Naive thymus-derived CD4-positive, alpha-beta T cell (primary cell): ENCODE measurements at regions of chr3 and their contacts with region 1.

Region 1: DNA sequence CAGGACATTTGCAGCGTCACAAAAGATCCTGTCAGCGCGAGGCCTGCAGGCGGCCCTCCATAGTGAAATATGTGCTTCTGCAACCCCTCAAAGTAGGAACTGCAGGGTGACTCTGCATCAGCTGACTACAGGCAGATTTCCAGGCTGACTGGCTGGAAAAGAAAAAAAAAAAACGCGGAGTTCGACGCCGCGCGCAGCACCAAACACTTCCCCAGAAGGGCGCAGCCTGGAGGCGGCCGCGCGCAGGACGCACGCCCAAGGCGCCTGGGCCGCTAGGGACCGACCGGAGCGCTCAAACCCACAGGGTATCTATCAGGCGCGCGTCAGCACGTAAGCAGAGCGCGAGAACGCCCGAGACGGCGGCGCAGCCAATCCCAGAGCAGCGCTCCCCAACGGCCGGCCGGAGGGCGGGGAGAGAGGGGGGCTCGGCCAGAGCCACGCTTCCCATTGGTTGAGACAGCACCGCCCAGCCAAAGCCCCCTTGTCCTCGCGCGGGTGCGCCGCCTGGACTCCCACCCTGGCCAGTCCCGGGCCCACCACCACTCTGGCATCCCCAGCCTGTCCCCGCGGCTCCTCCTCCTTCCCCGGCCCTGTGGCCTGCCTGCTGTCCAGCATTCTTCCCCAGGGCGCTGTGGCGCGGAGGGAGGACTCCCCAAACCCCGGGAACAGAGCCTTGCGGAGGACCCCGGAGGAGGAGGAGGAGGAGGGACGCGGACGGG is 1.0 kb downstream of the BDH1 start:
- DNase-seq: peak; percentile 76 to 93 (median 83)
- ATAC-seq: peak; percentile 97
- H3K4me3 ChIP-seq: peak overlapping the region; percentile 96
- H3K4me3 Mint-ChIP-seq: peak overlapping the region; percentile 91 to 95 (median 93)
- H3K27ac ChIP-seq: peak overlapping the region; percentile 89
- H3K27ac Mint-ChIP-seq: peak overlapping the region; percentile 57 to 94 (median 86)
- H3K4me1 ChIP-seq: peaks cover 7 to 9% of the 10 kb centered on the region in 2 donors
- H3K4me1 Mint-ChIP-seq: peaks cover 23 to 36% (median 31%) of the 10 kb centered on the region in 7 donors
- H3K27me3 ChIP-seq: no peaks in the 10 kb centered on the region
- H3K27me3 Mint-ChIP-seq: peaks cover 0 to 10% (median 6%) of the 10 kb centered on the region in 5 donors

Region 2: DNA sequence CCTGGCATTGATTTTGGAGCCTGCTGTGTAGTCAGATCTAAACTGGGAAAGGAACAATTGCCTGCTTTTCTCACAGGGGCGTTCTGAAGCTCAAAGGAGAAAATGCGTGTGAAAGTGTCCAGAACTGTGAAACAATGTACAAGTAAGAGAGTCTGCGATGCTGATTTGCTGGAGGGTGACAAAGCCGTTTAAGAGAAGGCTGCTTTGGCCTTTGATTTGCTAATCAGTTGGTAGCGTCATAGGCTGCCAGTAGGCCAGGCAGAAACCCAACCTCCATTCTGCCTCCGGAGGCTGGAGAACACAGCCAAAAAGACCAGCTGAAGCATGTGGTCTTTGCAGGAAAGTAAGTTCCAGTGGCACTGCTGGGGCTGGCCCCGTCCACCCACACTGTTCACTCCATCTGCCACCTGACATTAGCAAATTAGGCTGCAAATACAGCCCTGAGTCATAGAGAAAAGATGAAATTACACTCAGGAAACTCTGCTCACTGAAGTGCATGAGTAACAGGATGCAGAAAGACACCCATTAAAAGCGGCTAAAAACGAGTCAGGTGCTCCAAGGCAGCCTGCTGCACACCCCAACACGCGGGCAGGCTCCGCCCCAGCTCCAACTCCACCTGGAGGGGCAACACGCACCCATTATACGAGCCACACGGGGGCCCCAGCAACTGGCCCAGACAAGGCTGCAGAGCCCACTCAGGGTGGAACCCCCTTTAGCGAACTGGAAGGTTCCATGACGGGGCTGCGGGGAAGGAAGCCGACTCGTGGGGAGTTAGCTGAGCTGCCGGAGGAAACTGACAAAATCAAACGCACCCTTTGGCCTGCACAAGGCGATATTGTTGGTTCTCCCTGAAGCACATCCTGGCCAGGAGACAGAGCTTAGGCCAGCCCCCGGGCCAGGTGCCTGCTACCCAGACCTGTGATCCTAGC is 1375.1 kb before region 1 on chr3:
- CTCF ChIA-PET with region 1: no interaction called
- POLR2A ChIA-PET with region 1: no interaction called
- intact Hi-C with region 1: no loop called
- DNase-seq: peak; percentile 56 to 91 (median 87)
- ATAC-seq: peak; percentile 93
- H3K4me3 ChIP-seq: peak overlapping the region; percentile 41
- H3K4me3 Mint-ChIP-seq: peak overlapping the region; percentile 66 to 88 (median 72)
- H3K27ac ChIP-seq: peak overlapping the region; percentile 79
- H3K27ac Mint-ChIP-seq: peak overlapping the region; percentile 86 to 99 (median 93)
- H3K4me1 ChIP-seq: peaks cover 29 to 44% of the 10 kb centered on the region in 2 donors
- H3K4me1 Mint-ChIP-seq: peaks cover 16 to 62% (median 35%) of the 10 kb centered on the region in 7 donors
- H3K27me3 ChIP-seq: no peaks in the 10 kb centered on the region
- H3K27me3 Mint-ChIP-seq: no peaks in the 10 kb centered on the region

Region 3: GRCh38 chr3:196432137-196432879 is 1122.4 kb before region 1 on chr3 and contains the start of gene UBXN7:
- CTCF ChIA-PET with region 1: no interaction called
- POLR2A ChIA-PET with region 1: no interaction called
- intact Hi-C with region 1: loop called in 1 of 2 experiments (anchors 10 kb)
- DNase-seq: peak; percentile 92 to 97 (median 95)
- ATAC-seq: peak; percentile 94
- H3K4me3 ChIP-seq: peak within 1 kb of the TSS; percentile 100
- H3K4me3 Mint-ChIP-seq: peak within 1 kb of the TSS; percentile 81 to 98 (median 86)
- H3K27ac ChIP-seq: peak within 1 kb of the TSS; percentile 90
- H3K27ac Mint-ChIP-seq: peak within 1 kb of the TSS; percentile 68 to 95 (median 81)
- H3K4me1 ChIP-seq: peaks cover 4 to 6% of the 10 kb centered on the region in 2 donors
- H3K4me1 Mint-ChIP-seq: peaks cover 17 to 39% (median 32%) of the 10 kb centered on the region in 7 donors
- H3K27me3 ChIP-seq: no peaks in the 10 kb centered on the region
- H3K27me3 Mint-ChIP-seq: peaks cover 0 to 2% (median 0%) of the 10 kb centered on the region in 5 donors
- total RNA-seq, gene UBXN7: 52.6 to 90.6 (median 77.0) TPM

Region 4: DNA sequence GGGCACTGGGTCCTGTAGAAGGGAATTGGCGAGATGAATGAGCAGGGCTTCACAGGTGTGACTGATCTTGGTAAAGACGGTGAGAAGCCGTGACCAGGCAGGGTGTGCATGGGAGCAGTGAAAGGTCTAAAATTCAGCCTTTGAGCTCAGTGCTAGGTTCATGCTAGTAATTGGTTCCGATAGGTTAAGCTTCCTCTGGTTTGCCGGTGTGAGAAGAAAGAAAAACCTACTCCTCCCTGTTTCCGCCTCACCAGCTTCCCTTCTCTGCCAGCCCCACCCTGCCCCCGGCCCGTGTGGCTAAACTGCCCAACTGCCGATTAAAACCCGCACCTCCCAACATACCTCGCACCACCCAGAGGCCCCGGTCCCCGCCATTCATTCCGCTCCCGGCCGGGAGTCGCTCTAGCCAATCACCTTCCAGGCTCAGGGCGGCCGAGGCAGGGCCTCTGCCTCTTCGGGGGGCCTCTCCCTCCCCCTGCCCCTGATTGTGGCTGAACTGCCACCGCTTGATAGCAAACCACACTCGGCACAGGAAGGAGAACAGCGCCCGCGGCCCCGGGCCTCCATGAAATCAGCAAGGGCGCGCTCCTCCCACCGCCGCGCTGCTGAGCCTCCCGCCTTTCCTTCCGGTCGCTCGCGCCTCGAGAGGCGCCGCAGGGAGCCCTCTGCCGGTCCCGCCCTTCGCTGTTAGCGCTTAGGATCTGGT is 922.5 kb before region 1 on chr3:
- CTCF ChIA-PET with region 1: no interaction called
- POLR2A ChIA-PET with region 1: no interaction called
- intact Hi-C with region 1: loop called in 1 of 2 experiments (anchors 10 kb)
- DNase-seq: peak; percentile 69 to 91 (median 88)
- ATAC-seq: peak; percentile 89
- H3K4me3 ChIP-seq: peak overlapping the region; percentile 48
- H3K4me3 Mint-ChIP-seq: peak overlapping the region; percentile 80 to 96 (median 90)
- H3K27ac ChIP-seq: peak overlapping the region; percentile 78
- H3K27ac Mint-ChIP-seq: peak overlapping the region; percentile 93 to 99 (median 97)
- H3K4me1 ChIP-seq: peaks cover 30 to 31% of the 10 kb centered on the region in 2 donors
- H3K4me1 Mint-ChIP-seq: peaks cover 31 to 74% (median 62%) of the 10 kb centered on the region in 7 donors
- H3K27me3 ChIP-seq: no peaks in the 10 kb centered on the region
- H3K27me3 Mint-ChIP-seq: no peaks in the 10 kb centered on the region

Region 5: DNA sequence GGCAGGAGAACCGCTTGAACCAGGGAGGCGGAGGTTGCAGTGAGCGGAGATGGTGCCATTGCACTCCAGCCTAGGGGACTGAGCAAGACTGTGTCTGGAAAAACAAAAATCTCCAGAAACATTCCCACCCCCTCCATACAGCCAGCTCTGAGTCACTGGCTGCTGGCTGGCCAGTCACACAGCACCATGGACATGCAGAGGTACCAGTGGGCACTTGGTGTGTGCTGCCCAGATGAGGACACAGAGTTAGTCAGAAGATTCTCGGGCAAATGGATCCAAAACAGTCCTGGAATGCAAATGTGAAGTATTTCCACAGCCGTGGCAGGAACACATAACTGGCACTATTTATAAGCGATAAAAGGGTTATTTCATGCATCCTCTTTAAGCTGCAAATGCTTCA is 43.6 kb before region 1 on chr3:
- CTCF ChIA-PET with region 1: interaction called, 3 read pairs
- POLR2A ChIA-PET with region 1: no interaction called
- intact Hi-C with region 1: loop called in 1 of 2 experiments (anchors 5 kb)
- DNase-seq: no peak
- ATAC-seq: no peak
- H3K4me3 ChIP-seq: no peak overlapping the region
- H3K4me3 Mint-ChIP-seq: no peak overlapping the region
- H3K27ac ChIP-seq: no peak overlapping the region
- H3K27ac Mint-ChIP-seq: no peak overlapping the region
- H3K4me1 ChIP-seq: no peaks in the 10 kb centered on the region
- H3K4me1 Mint-ChIP-seq: peaks cover 0 to 10% (median 9%) of the 10 kb centered on the region in 7 donors
- H3K27me3 ChIP-seq: no peaks in the 10 kb centered on the region
- H3K27me3 Mint-ChIP-seq: no peaks in the 10 kb centered on the region

Region 6: DNA sequence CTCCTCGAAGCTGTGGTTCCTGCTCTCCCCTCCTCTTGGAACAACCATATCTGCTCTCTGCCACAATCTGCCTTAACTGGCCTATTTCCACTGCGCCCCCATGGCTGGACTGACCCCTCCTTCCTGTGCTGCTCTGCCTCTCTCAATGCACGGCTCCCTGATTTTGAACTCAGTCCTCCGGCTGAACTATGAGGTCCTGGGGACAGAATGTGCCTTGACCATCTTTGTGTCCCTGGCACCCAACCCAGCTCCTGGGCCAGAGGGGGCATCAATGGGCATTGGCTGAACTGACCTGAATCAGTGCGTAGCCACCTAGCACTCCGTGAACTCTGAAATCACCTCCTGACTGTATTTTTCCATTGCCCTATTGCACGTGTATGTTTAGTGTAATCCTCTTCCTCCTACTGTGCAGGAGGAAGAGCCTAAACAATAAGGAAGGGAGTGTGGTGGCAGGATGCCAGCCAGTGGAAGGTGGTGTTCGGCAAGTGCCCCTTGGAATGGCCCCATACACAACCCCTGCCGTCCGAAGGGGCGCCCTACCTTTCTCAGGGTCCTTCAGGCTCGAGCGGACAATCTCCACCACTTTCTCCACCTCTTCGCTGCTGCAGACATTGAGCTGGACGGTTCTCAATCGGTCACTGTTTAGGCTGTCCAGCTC is 32.5 kb before region 1 on chr3:
- CTCF ChIA-PET with region 1: no interaction called
- POLR2A ChIA-PET with region 1: no interaction called
- intact Hi-C with region 1: no loop called
- DNase-seq: no peak
- ATAC-seq: no peak
- H3K4me3 ChIP-seq: no peak overlapping the region
- H3K4me3 Mint-ChIP-seq: no peak overlapping the region
- H3K27ac ChIP-seq: no peak overlapping the region
- H3K27ac Mint-ChIP-seq: peak overlapping the region in 8 of 9 donors; percentile 43 to 77 (median 68)
- H3K4me1 ChIP-seq: no peaks in the 10 kb centered on the region
- H3K4me1 Mint-ChIP-seq: peaks cover 4 to 17% (median 4%) of the 10 kb centered on the region in 7 donors
- H3K27me3 ChIP-seq: no peaks in the 10 kb centered on the region
- H3K27me3 Mint-ChIP-seq: no peaks in the 10 kb centered on the region

Region 7: GRCh38 chr3:197599089-197599765 is 44.5 kb after region 1 on chr3:
- CTCF ChIA-PET with region 1: no interaction called
- POLR2A ChIA-PET with region 1: no interaction called
- intact Hi-C with region 1: loop called in 1 of 2 experiments (anchors 2 kb)
- DNase-seq: peak; percentile 47 to 84 (median 79)
- ATAC-seq: peak; percentile 97
- H3K4me3 ChIP-seq: no peak overlapping the region
- H3K4me3 Mint-ChIP-seq: peak overlapping the region in 2 of 10 donors; percentile 6 to 28
- H3K27ac ChIP-seq: no peak overlapping the region
- H3K27ac Mint-ChIP-seq: peak overlapping the region in 8 of 9 donors; percentile 23 to 79 (median 58)
- H3K4me1 ChIP-seq: peaks cover 0 to 9% of the 10 kb centered on the region in 2 donors
- H3K4me1 Mint-ChIP-seq: peaks cover 6 to 24% (median 10%) of the 10 kb centered on the region in 7 donors
- H3K27me3 ChIP-seq: no peaks in the 10 kb centered on the region
- H3K27me3 Mint-ChIP-seq: peaks cover 0 to 4% (median 0%) of the 10 kb centered on the region in 5 donors

Region 8: GRCh38 chr3:197736491-197737318 is 182.0 kb after region 1 on chr3 and contains the start of gene RUBCN:
- CTCF ChIA-PET with region 1: no interaction called
- POLR2A ChIA-PET with region 1: no interaction called
- intact Hi-C with region 1: loop called (anchors 1 to 10 kb)
- DNase-seq: peak; percentile 81 to 95 (median 93)
- ATAC-seq: peak; percentile 98
- H3K4me3 ChIP-seq: peak within 1 kb of the TSS; percentile 67
- H3K4me3 Mint-ChIP-seq: peak within 1 kb of the TSS; percentile 82 to 99 (median 96)
- H3K27ac ChIP-seq: peak within 1 kb of the TSS; percentile 83
- H3K27ac Mint-ChIP-seq: peak within 1 kb of the TSS; percentile 89 to 99 (median 97)
- H3K4me1 ChIP-seq: peaks cover 9 to 10% of the 10 kb centered on the region in 2 donors
- H3K4me1 Mint-ChIP-seq: peaks cover 29 to 52% (median 32%) of the 10 kb centered on the region in 7 donors
- H3K27me3 ChIP-seq: no peaks in the 10 kb centered on the region
- H3K27me3 Mint-ChIP-seq: no peaks in the 10 kb centered on the region
- total RNA-seq, gene RUBCN: 43.3 to 61.7 (median 52.9) TPM

Region 9: GRCh38 chr3:197959898-197960693 is 405.4 kb after region 1 on chr3 and contains the start of gene LMLN:
- CTCF ChIA-PET with region 1: no interaction called
- POLR2A ChIA-PET with region 1: no interaction called
- intact Hi-C with region 1: loop called (anchors 5 to 10 kb)
- DNase-seq: peak; percentile 93 to 96 (median 95)
- ATAC-seq: peak; percentile 98
- H3K4me3 ChIP-seq: peak within 1 kb of the TSS; percentile 91
- H3K4me3 Mint-ChIP-seq: peak within 1 kb of the TSS; percentile 86 to 98 (median 92)
- H3K27ac ChIP-seq: peak within 1 kb of the TSS; percentile 86
- H3K27ac Mint-ChIP-seq: peak within 1 kb of the TSS; percentile 92 to 97 (median 96)
- H3K4me1 ChIP-seq: peaks cover 26 to 27% of the 10 kb centered on the region in 2 donors
- H3K4me1 Mint-ChIP-seq: peaks cover 33 to 74% (median 48%) of the 10 kb centered on the region in 7 donors
- H3K27me3 ChIP-seq: no peaks in the 10 kb centered on the region
- H3K27me3 Mint-ChIP-seq: peaks cover 0 to 2% (median 0%) of the 10 kb centered on the region in 5 donors
- total RNA-seq, gene LMLN: 4.2 to 10.9 (median 6.8) TPM